Psoas muscle (tissue), 8 donors: ENCODE measurements at regions of chr1 and their contacts with region 1.

Region 1: GRCh38 chr1:10374442-10374860 is 24.4 kb upstream of the PGD start:
- DNase-seq: no peak
- ATAC-seq: no peak
- H3K4me3 ChIP-seq: no peak overlapping the region
- H3K27ac ChIP-seq: no peak overlapping the region
- H3K4me1 ChIP-seq: no peaks in the 10 kb centered on the region
- H3K27me3 ChIP-seq: no peaks in the 10 kb centered on the region
- CTCF ChIP-seq: no peak

Region 2: DNA sequence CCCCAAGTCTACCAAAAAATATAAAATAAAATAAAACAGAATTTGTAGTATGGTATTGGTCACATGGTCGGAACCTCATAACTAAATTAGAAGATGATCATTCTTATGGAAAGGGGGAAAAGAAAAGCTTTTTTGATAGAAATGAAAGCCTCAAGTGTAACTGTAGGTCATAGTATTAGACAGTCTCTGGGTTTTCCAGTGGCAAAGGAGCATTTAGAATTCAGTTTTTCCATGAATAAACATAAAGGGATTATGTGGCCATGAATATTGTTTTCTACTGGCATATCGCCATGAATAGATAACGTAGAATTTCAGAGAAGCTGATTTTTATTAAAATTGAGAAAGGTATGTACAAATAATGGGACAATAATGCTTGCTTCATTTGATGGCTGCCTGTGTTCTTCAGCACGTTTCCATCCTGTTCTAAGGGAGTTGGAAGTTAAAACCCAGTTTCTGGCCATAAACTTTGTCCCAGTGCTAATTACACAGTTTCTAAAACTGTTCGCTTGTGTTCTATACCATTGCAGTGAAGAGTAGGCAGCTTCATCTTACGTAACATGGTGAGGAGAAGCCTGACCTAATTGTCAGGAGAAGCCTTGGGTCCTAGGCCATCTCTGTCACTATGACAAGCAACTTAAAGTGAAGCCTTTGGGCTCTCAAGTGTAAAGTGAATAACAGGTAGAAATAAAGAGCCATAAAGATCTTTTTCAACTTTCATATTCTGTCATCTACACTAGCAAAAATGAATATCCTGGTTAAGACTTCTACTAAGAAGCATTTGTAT is 46.1 kb before region 1 on chr1:
- intact Hi-C with region 1: no loop called
- DNase-seq: no peak
- ATAC-seq: no peak
- H3K4me3 ChIP-seq: no peak overlapping the region
- H3K27ac ChIP-seq: no peak overlapping the region
- H3K4me1 ChIP-seq: no peaks in the 10 kb centered on the region
- H3K27me3 ChIP-seq: no peaks in the 10 kb centered on the region
- CTCF ChIP-seq: no peak

Region 3: DNA sequence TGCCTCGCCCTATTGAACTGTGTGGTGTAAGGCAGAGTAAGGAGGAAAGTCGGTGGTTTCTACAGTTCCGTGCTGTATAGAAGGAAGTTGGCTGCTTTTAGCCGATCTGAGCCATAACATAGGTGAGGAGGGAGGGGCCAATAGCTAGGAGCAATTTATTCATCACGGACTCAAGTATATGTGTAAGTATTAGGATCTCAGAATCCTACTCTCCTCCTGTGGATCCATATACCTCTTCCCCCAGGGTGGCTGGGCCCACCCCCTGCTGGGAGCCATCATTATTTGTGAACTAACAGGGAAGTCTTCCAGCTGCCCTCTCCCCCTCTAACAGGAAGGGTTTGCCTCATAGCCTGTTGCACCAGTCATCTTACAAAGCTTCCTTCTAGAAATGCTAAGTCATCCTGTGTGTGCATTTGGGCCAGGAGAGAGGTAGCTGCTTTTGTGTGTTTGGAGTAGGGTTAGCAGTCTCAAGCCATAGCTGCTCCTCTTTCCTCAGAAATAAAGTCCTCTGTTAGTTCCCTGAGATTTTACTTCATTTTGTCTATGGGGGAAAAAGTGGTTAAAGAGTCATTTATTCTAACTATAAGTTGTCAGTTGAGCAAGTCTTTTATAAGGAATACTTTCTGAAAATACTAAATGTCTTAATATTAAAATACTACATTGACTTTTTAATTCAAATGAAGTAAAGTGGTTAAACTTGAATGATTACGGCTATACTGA is 40.9 kb after region 1 on chr1:
- intact Hi-C with region 1: loop called in 1 of 2 experiments (anchors 5 kb)
- DNase-seq: no peak
- ATAC-seq: peak in 3 of 4 donors; percentile 31 to 45 (median 35)
- H3K4me3 ChIP-seq: no peak overlapping the region
- H3K27ac ChIP-seq: peak overlapping the region; percentile 6
- H3K4me1 ChIP-seq: no peaks in the 10 kb centered on the region
- H3K27me3 ChIP-seq: no peaks in the 10 kb centered on the region
- CTCF ChIP-seq: no peak